ENCODE measurements at regions of chr4 and their contacts with region 1.

Region 1: GRCh38 chr4:142379277-142380057 is 466.6 kb downstream of the INPP4B start:
- DNase-seq: no peak
- H3K4me3 ChIP-seq: no peak overlapping the region
- H3K27ac ChIP-seq: peak overlapping the region; percentile 61 to 71
- H3K4me1 ChIP-seq: peaks cover 4 to 18% of the 10 kb centered on the region in 2 donors
- H3K27me3 ChIP-seq: no peaks in the 10 kb centered on the region
- CTCF ChIP-seq: no peak

Region 2: DNA sequence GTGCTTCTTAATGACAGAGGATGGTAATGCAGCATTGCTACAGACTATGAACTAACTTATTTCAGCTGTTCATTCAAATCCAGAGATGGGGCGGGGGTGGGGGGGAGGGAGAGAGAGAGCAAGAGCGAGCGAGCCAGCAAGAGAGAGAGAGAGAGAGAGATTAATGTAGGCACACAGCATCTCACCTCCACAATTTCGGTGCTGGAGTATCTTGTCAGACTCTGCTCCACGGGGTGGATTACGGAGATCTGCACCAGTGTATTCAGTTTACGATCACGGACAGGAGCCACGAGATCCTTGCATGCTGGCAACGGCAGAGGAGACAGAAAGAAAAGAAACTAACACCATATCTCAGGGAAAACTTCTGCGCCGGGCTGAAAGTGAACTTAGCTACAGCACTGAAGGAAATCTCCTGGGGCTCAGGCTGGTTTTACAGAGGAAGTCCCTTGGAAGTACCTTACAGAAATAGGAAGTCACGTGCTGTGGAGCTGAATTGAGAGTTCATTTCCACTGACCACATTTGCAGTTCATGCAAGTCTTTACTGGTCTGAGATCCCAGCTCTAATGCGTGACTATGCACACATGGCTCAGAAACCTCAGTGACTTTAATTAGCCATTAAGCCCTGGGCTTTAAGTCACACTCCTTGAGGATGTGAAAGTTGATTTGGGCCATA is 25.7 kb after region 1 on chr4:
- intact Hi-C with region 1: loop called (anchors 2 kb)
- DNase-seq: peak in 1 of 2 donors; percentile 69
- H3K4me3 ChIP-seq: peak overlapping the region; percentile 46 to 73
- H3K27ac ChIP-seq: peak overlapping the region; percentile 73 to 76
- H3K4me1 ChIP-seq: peaks cover 3 to 15% of the 10 kb centered on the region in 2 donors
- H3K27me3 ChIP-seq: no peaks in the 10 kb centered on the region
- CTCF ChIP-seq: no peak

Measured in ascending aorta (tissue), 2 donors.